ENCODE measurements at regions of chr2 and their contacts with region 1.

Region 1: GRCh38 chr2:233443468-233444183 is 89.3 kb downstream of the DGKD start:
- DNase-seq: peak; percentile 56
- H3K4me3 ChIP-seq: no peak overlapping the region
- H3K27ac ChIP-seq: no peak overlapping the region
- H3K4me1 ChIP-seq: no peaks in the 10 kb centered on the region
- H3K27me3 ChIP-seq: no peaks in the 10 kb centered on the region
- CTCF ChIP-seq: peak; percentile 84 to 89

Region 2: GRCh38 chr2:233270366-233270765 is 173.3 kb before region 1 on chr2:
- CTCF ChIA-PET with region 1: no interaction called
- dilution Hi-C with region 1: loop called (anchors 10 kb)
- in situ Hi-C with region 1: no loop called
- intact Hi-C with region 1: no loop called
- DNase-seq: no peak
- H3K4me3 ChIP-seq: no peak overlapping the region
- H3K27ac ChIP-seq: no peak overlapping the region
- H3K4me1 ChIP-seq: no peaks in the 10 kb centered on the region
- H3K27me3 ChIP-seq: no peaks in the 10 kb centered on the region
- CTCF ChIP-seq: no peak

Region 3: DNA sequence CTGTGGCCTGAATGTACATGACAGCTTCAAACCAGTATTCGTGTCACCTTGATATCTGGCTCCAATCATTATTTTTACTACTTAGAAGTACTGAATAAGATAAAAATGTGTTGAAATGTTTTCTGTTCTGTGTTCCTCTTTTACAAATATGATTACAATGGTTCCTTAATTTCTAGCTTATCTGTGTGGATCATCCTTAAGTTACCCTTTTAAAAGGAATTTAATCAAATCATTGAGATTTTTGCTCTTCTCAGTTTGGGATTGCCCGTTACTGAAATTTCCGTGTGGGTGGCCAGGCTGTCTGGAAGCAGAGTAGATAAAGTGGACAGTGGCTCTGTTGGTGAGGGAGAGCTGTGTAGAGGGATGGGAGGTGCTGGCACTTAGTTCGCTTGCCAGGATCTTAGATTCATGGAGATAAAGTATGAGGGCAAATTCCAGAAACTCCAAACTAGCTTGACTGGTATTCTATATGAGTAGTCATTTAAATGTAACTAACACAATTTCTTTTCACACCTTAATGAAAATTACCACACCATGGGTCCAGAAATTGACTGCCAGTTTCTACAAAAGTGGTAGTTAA is 163.4 kb before region 1 on chr2:
- CTCF ChIA-PET with region 1: no interaction called
- dilution Hi-C with region 1: loop called (anchors 10 kb)
- in situ Hi-C with region 1: no loop called
- intact Hi-C with region 1: loop called (anchors 5 kb)
- DNase-seq: no peak
- H3K4me3 ChIP-seq: no peak overlapping the region
- H3K27ac ChIP-seq: no peak overlapping the region
- H3K4me1 ChIP-seq: no peaks in the 10 kb centered on the region
- H3K27me3 ChIP-seq: no peaks in the 10 kb centered on the region
- CTCF ChIP-seq: no peak

Region 4: GRCh38 chr2:233404222-233404621 is 39.4 kb before region 1 on chr2:
- CTCF ChIA-PET with region 1: interaction called, 8 read pairs
- dilution Hi-C with region 1: no loop called
- in situ Hi-C with region 1: no loop called
- intact Hi-C with region 1: loop called (anchors 1 kb)
- DNase-seq: peak; percentile 46
- H3K4me3 ChIP-seq: no peak overlapping the region
- H3K27ac ChIP-seq: no peak overlapping the region
- H3K4me1 ChIP-seq: no peaks in the 10 kb centered on the region
- H3K27me3 ChIP-seq: no peaks in the 10 kb centered on the region
- CTCF ChIP-seq: peak; percentile 94 to 95

Measured in mammary epithelial cell (primary cell).